Activated naive CD4-positive, alpha-beta T cell treated with anti-CD3 and anti-CD28 coated beads for 36 hours (primary cell): ENCODE measurements at regions of chr6 and their contacts with region 1.

Region 1: DNA sequence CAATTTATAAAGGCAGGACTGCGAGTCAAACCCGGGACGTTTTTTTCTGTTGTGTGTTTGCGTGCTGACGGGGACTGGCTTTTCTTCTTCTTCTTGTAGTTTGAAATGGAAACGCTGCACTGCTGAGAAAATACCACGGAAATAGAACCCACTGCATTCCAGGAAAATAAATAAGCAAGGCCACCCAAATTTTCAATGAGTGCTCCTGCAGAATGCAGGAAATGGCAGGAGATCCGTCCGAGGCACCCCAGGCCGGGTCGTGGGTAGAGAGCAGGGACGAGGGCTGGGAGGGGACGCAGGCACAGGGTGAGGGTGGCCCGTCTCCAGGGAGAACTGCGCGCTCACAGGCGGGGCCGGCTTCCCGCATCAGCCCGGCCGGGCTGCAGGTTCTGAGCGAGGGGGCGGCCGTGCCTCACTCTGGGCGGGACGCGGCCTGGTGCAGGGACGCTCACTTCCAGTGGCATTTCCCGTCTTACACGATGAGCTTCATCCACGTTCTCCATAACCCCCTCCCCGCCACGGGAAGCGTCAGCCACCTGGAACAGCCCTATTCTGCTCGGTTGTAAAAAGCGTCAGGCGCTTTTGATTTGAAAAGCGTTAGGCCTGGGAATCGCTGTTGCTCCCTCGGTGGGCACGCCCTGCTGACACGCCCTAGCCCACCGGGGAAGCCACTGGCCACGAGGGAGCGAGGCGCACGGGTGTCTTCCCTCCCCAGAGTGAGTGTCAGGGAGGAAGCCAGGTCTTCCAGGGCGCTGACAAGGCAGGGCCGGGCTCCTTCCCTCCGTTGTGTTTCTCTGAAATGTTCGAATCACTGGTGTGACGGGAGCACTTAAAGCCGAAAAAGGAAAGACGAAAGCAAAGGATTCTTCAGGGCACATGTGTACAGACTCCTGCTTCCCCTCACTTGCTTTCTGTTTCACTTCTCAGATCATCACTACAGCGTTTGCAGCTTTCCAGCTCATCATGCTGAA is 17.9 kb upstream of the EXOC2 start:
- DNase-seq: peak; percentile 64
- H3K4me3 Mint-ChIP-seq: peak overlapping the region; percentile 89
- H3K27ac Mint-ChIP-seq: peak overlapping the region; percentile 92
- H3K4me1 Mint-ChIP-seq: peaks cover 21% of the 10 kb centered on the region
- H3K27me3 Mint-ChIP-seq: peaks cover 4% of the 10 kb centered on the region

Region 2: GRCh38 chr6:336159-337019 is 374.5 kb before region 1 on chr6:
- CTCF ChIA-PET with region 1: no interaction called
- intact Hi-C with region 1: loop called (anchors 5 kb)
- DNase-seq: no peak
- H3K4me3 Mint-ChIP-seq: no peak overlapping the region
- H3K27ac Mint-ChIP-seq: no peak overlapping the region
- H3K4me1 Mint-ChIP-seq: peaks cover 40% of the 10 kb centered on the region
- H3K27me3 Mint-ChIP-seq: no peaks in the 10 kb centered on the region